ENCODE measurements at regions of chr9 and their contacts with region 1.

Region 1: DNA sequence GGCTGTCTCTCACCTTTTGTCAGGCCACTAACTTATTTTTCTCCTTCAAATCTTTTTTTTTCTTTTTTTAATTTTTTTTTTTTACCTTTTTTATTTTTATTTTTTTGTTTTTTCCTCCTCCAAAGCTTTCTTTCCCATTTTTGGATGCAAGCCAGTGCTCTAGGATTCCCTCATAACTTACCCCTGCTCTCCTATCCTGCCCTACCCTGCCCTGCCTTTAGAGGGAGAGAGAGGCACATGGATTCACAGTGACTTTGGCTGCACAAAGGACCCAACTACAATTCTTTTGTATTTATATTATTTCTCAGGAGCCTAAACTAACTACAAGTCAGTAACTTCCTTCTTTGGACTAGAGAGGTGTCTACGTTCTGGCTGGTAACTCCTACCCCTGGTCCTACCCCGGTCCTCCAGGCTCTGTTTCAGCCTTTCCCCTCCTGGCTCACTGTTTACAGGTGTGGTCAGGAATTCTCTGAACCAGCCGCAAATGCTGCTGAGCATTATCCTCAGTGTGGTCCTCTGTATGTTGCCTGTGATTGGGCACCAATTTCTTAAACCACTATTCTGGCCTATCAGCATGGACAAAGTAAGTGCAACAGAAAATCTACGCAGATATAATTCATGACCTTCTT is 8.4 kb upstream of the RUSC2 start:
- DNase-seq: peak; percentile 76
- H3K4me3 Mint-ChIP-seq: no peak overlapping the region
- H3K27ac Mint-ChIP-seq: no peak overlapping the region
- H3K4me1 Mint-ChIP-seq: no peaks in the 10 kb centered on the region
- H3K27me3 Mint-ChIP-seq: peaks cover 6% of the 10 kb centered on the region

Region 2: DNA sequence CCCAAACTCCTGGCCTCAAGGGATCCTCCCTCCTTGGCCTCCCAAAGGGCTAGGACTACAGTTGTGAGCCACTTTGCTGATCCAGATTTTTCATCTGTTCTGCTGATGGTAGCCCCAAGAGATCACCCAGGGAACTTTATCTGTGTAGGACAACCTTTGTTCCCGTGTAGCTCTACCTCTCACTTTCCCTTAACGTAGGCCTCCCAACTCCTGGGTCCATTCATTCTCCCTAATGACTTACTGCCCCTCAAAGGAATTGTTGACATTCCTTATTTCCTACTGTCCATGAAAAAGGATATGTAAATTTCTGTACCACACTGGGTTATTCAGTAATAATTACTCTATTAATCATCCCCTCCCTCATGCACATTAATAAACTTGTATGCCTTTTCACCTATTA is 574.4 kb before region 1 on chr9:
- intact Hi-C with region 1: no loop called
- DNase-seq: no peak
- H3K4me3 Mint-ChIP-seq: no peak overlapping the region
- H3K27ac Mint-ChIP-seq: no peak overlapping the region
- H3K4me1 Mint-ChIP-seq: no peaks in the 10 kb centered on the region
- H3K27me3 Mint-ChIP-seq: peaks cover 33% of the 10 kb centered on the region

Region 3: DNA sequence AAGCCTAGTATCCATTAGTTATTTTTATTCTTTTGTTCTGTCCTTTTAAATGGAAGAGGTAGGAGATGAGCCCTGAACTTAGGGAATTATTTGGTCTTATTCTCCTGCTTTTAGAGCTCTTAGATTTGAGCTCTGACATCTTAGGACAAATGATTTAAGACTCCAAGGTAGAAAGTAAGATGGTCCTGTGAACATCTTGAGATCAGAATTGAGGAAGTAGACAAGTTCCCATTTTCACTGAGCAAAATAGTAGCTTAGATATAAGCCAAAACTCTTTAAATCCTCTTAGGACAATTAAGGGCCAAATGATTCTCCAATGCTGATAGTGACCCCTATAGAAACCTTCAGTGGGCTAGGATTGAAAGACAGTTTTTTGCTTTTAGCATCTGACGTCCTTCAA is 44.5 kb before region 1 on chr9:
- intact Hi-C with region 1: no loop called
- DNase-seq: no peak
- H3K4me3 Mint-ChIP-seq: no peak overlapping the region
- H3K27ac Mint-ChIP-seq: no peak overlapping the region
- H3K4me1 Mint-ChIP-seq: no peaks in the 10 kb centered on the region
- H3K27me3 Mint-ChIP-seq: peaks cover 16% of the 10 kb centered on the region

Region 4: GRCh38 chr9:35518226-35518821 is 36.9 kb after region 1 on chr9:
- intact Hi-C with region 1: no loop called
- DNase-seq: no peak
- H3K4me3 Mint-ChIP-seq: no peak overlapping the region
- H3K27ac Mint-ChIP-seq: no peak overlapping the region
- H3K4me1 Mint-ChIP-seq: no peaks in the 10 kb centered on the region
- H3K27me3 Mint-ChIP-seq: no peaks in the 10 kb centered on the region

Region 5: GRCh38 chr9:35553670-35554543 is 72.4 kb after region 1 on chr9:
- intact Hi-C with region 1: loop called (anchors 1 kb)
- DNase-seq: peak; percentile 83
- H3K4me3 Mint-ChIP-seq: no peak overlapping the region
- H3K27ac Mint-ChIP-seq: no peak overlapping the region
- H3K4me1 Mint-ChIP-seq: no peaks in the 10 kb centered on the region
- H3K27me3 Mint-ChIP-seq: no peaks in the 10 kb centered on the region